Caco-2 (cell line): ENCODE measurements at regions of chr2 and their contacts with region 1.

Region 1: DNA sequence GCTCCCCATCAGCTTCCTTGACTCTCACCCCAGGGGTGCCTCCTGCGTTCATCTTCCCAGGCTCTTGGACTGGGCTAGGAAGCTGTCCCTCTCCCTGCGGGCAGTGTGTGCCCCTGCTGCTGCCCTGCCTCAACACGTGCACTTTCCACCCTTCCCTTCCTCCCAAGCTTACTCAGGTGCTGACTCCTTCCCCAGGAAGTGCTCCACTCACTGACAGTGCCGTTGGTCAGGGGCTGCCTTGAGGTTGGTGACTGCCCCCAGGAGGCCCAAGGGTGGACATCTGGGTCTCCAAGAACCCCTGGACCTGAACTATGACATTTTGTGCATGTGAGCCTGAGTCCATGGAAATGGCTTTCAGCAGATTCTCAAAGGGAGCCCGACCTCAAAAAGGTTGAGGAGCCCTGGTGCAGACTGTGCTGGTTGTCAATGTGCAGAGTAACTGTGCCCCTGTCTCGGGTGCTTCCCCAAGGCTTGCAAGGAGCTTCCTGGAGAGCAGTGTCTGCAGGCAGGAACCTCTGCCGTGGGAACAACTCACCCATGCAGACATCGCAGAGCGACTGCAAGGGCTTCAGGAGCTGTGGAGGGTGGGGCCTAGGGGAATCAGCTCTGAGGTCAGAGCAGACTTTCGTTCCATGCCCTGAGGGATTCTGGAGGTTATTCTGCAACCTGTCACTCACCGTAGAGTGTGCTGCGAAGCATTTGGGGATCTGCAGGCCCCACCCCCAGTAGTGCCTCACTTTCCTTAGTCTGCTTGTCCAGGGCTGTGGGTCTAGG is 116.5 kb upstream of the MCFD2 start:
- DNase-seq: peak; percentile 36 to 64
- H3K4me3 ChIP-seq: no peak overlapping the region
- H3K4me3 Mint-ChIP-seq: no peak overlapping the region
- H3K27ac Mint-ChIP-seq: peak overlapping the region; percentile 97
- H3K4me1 ChIP-seq: peaks cover 77% of the 10 kb centered on the region
- H3K4me1 Mint-ChIP-seq: peaks cover 63% of the 10 kb centered on the region
- H3K27me3 ChIP-seq: no peaks in the 10 kb centered on the region
- H3K27me3 Mint-ChIP-seq: no peaks in the 10 kb centered on the region
- CTCF ChIP-seq: no peak

Region 2: GRCh38 chr2:46016091-46016490 is 1016.0 kb before region 1 on chr2:
- CTCF ChIA-PET with region 1: no interaction called
- POLR2A ChIA-PET with region 1: interaction called, 14 read pairs
- intact Hi-C with region 1: no loop called
- DNase-seq: no peak
- H3K4me3 ChIP-seq: no peak overlapping the region
- H3K4me3 Mint-ChIP-seq: no peak overlapping the region
- H3K27ac Mint-ChIP-seq: no peak overlapping the region
- H3K4me1 ChIP-seq: no peaks in the 10 kb centered on the region
- H3K4me1 Mint-ChIP-seq: no peaks in the 10 kb centered on the region
- H3K27me3 ChIP-seq: no peaks in the 10 kb centered on the region
- H3K27me3 Mint-ChIP-seq: no peaks in the 10 kb centered on the region
- CTCF ChIP-seq: no peak

Region 3: GRCh38 chr2:47058003-47058931 is 26.2 kb after region 1 on chr2:
- CTCF ChIA-PET with region 1: no interaction called
- POLR2A ChIA-PET with region 1: no interaction called
- intact Hi-C with region 1: no loop called
- DNase-seq: no peak
- H3K4me3 ChIP-seq: no peak overlapping the region
- H3K4me3 Mint-ChIP-seq: no peak overlapping the region
- H3K27ac Mint-ChIP-seq: peak overlapping the region; percentile 71
- H3K4me1 ChIP-seq: peaks cover 5% of the 10 kb centered on the region
- H3K4me1 Mint-ChIP-seq: peaks cover 22% of the 10 kb centered on the region
- H3K27me3 ChIP-seq: no peaks in the 10 kb centered on the region
- H3K27me3 Mint-ChIP-seq: no peaks in the 10 kb centered on the region
- CTCF ChIP-seq: no peak

Region 4: DNA sequence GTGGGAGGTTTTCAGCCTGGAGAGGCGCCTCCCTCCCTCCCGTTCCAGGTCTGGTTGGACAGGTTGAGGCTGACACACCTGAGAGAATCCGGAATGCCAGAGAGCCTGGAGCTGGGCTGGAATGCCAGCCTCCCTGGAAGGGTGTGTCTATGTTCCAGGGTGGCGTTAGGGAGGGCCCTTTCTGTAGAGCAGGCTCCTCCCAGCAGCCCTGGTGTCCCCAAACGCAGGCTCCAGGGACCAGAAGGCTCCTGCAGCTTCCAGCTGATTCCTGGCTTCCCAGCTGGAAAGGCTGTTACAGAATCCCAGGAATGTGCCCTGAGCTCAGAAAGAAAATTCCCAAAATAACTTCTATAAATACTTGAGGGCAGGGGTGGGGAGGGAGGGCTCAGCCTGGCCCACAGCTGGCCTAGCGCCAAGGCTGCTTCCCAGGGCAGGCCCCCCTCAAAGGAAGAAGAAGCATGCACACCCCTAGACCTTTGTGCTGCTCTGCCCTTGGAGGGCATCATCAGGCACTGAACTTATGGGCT is 37.6 kb after region 1 on chr2:
- CTCF ChIA-PET with region 1: interaction called, 9 read pairs
- POLR2A ChIA-PET with region 1: interaction called, 18 read pairs
- intact Hi-C with region 1: no loop called
- DNase-seq: peak; percentile 94 to 96
- H3K4me3 ChIP-seq: no peak overlapping the region
- H3K4me3 Mint-ChIP-seq: no peak overlapping the region
- H3K27ac Mint-ChIP-seq: peak overlapping the region; percentile 91
- H3K4me1 ChIP-seq: peaks cover 55% of the 10 kb centered on the region
- H3K4me1 Mint-ChIP-seq: peaks cover 59% of the 10 kb centered on the region
- H3K27me3 ChIP-seq: no peaks in the 10 kb centered on the region
- H3K27me3 Mint-ChIP-seq: no peaks in the 10 kb centered on the region
- CTCF ChIP-seq: no peak

Region 5: DNA sequence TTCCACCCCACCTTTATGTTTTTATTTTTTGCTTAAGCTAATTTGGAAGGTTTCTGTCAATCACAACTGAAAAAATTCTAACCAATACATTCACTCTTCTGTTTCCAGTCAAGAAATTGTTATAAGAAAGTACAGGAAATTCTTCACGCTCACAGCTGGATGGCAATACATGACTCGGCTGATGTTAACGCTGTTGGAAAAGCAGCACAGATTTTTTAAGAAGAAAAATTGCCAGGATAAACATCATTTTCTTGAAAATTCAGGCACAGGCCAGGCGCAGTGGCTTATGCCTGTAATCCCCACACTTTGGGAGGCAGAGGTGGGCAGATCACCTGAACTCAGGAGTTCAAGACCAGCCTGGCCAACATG is 76.9 kb after region 1 on chr2:
- CTCF ChIA-PET with region 1: no interaction called
- POLR2A ChIA-PET with region 1: no interaction called
- intact Hi-C with region 1: no loop called
- DNase-seq: no peak
- H3K4me3 ChIP-seq: no peak overlapping the region
- H3K4me3 Mint-ChIP-seq: no peak overlapping the region
- H3K27ac Mint-ChIP-seq: peak overlapping the region; percentile 85
- H3K4me1 ChIP-seq: peaks cover 25% of the 10 kb centered on the region
- H3K4me1 Mint-ChIP-seq: peaks cover 22% of the 10 kb centered on the region
- H3K27me3 ChIP-seq: no peaks in the 10 kb centered on the region
- H3K27me3 Mint-ChIP-seq: no peaks in the 10 kb centered on the region
- CTCF ChIP-seq: no peak